ENCODE measurements at regions of chr22 and their contacts with region 1.

Region 1: GRCh38 chr22:37817705-37818408 is 5.3 kb upstream of the GALR3 start:
- DNase-seq: peak; percentile 82 to 98 (median 92)
- ATAC-seq: peak; percentile 90 to 96 (median 94)
- H3K4me3 ChIP-seq: peak overlapping the region in 2 of 4 donors; percentile 25 to 44
- H3K27ac ChIP-seq: peak overlapping the region in 1 of 4 donors; percentile 36
- H3K4me1 ChIP-seq: peaks cover 3 to 14% (median 11%) of the 10 kb centered on the region in 3 donors
- H3K27me3 ChIP-seq: no peaks in the 10 kb centered on the region
- CTCF ChIP-seq: peak; percentile 94 to 97 (median 96)

Region 2: GRCh38 chr22:37676736-37677492 is 140.9 kb before region 1 on chr22:
- intact Hi-C with region 1: no loop called
- DNase-seq: peak; percentile 83 to 87 (median 86)
- ATAC-seq: peak; percentile 73 to 81 (median 78)
- H3K4me3 ChIP-seq: peak overlapping the region; percentile 36 to 63 (median 48)
- H3K27ac ChIP-seq: peak overlapping the region; percentile 18 to 87 (median 64)
- H3K4me1 ChIP-seq: peaks cover 0 to 29% (median 14%) of the 10 kb centered on the region in 3 donors
- H3K27me3 ChIP-seq: no peaks in the 10 kb centered on the region
- CTCF ChIP-seq: no peak

Region 3: GRCh38 chr22:37862570-37863325 is 44.9 kb after region 1 on chr22:
- intact Hi-C with region 1: loop called in 2 of 3 experiments (anchors 5 kb)
- DNase-seq: no peak
- ATAC-seq: peak; percentile 34 to 43 (median 38)
- H3K4me3 ChIP-seq: no peak overlapping the region
- H3K27ac ChIP-seq: peak overlapping the region in 2 of 4 donors; percentile 69 to 77
- H3K4me1 ChIP-seq: peaks cover 10 to 51% (median 40%) of the 10 kb centered on the region in 3 donors
- H3K27me3 ChIP-seq: no peaks in the 10 kb centered on the region
- CTCF ChIP-seq: no peak

Region 4: GRCh38 chr22:37933711-37934376 is 116.0 kb after region 1 on chr22:
- intact Hi-C with region 1: loop called in 1 of 3 experiments (anchors 10 kb)
- DNase-seq: peak; percentile 81 to 97 (median 95)
- ATAC-seq: peak; percentile 90 to 95 (median 91)
- H3K4me3 ChIP-seq: no peak overlapping the region
- H3K27ac ChIP-seq: peak overlapping the region; percentile 40 to 76 (median 60)
- H3K4me1 ChIP-seq: peaks cover 38 to 50% (median 50%) of the 10 kb centered on the region in 3 donors
- H3K27me3 ChIP-seq: no peaks in the 10 kb centered on the region
- CTCF ChIP-seq: peak; percentile 95 to 98 (median 97)

Region 5: DNA sequence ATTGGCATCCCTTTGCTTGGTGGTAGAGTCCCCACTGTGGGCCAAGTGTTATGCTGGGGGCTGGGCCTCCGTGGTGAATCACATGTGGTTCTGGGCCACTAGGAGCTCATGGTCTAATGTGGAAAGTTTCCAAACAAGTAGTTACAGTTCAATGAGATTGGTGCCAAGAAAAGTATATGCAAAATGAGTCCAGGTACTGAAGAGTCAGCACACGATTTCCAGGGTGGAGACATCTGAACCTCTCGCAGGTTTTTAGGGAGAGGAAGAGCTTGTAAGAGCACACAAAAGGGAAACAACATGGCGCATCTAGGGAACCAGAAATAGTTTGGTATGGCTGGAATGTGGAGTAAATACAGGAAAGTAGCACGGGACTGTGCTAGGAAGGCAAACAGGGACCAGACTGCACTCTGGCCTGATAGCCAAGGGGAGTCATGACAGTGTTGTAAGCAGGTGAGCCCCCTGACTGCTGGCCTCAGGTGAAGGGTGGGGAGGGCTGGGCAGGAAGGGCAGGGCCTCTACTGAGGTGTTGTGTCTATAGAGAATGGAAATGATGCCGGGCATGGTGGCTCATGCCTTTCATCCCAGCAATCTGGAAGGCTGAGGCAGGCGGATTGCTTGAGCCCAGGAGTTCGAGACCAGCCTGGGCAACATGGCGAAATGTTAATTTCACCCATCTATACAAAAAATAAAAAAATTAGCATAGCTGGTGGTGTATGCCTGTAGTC is 148.2 kb after region 1 on chr22:
- intact Hi-C with region 1: loop called in 2 of 3 experiments (anchors 10 kb)
- DNase-seq: no peak
- ATAC-seq: no peak
- H3K4me3 ChIP-seq: no peak overlapping the region
- H3K27ac ChIP-seq: no peak overlapping the region
- H3K4me1 ChIP-seq: no peaks in the 10 kb centered on the region
- H3K27me3 ChIP-seq: no peaks in the 10 kb centered on the region
- CTCF ChIP-seq: no peak